Adrenal gland (tissue), 19 donors: ENCODE measurements at regions of chr17 and their contacts with region 1.

Region 1: GRCh38 chr17:49779739-49780231 is 8.7 kb upstream of the KAT7 start:
- DNase-seq: peak in 5 of 7 donors; percentile 41 to 81 (median 59)
- H3K4me3 ChIP-seq: no peak overlapping the region
- H3K27ac ChIP-seq: peak overlapping the region in 1 of 5 donors; percentile 31
- H3K4me1 ChIP-seq: peaks cover 0 to 11% of the 10 kb centered on the region in 2 donors
- H3K27me3 ChIP-seq: no peaks in the 10 kb centered on the region
- CTCF ChIP-seq: peak; percentile 44 to 67 (median 63)
- POLR2A ChIP-seq: no peak

Region 2: DNA sequence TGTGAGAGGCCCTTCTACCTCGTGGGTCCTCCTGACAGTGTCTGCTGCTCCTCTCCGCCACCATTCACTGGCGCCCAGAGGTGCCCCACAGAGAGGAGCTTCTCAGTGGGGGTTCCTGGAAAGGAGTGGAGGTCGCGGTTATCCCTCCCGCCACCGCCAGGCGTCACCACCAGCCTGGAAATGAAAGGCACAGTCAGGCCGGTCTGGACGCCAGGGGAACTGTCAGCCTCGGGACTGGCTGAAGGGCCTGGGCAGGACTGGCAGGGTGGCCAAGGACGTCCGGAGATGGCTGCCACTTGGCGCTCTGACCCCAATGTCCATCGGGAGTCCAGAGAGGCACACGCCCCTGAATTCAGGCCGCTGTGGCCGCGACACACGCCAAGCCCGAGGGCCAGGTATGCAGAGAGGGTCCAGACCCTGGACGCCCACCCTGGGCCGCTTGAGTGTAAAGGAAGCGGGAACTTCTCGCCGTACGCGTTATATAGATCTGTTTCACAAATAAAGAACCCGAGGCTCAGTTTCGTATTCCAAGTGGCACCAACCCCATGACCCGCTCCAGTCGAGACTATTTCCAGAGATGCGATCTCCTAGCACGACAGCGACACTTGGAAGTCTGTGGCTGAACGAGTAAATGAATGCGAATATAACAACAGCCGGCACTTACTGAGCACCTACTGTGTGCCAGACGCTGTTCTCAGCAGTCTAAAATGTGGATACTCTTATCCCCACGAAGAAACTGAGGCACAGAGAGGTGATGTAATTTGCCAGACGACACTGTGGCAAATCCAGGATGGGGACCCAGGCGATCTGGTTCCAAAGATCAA is 211.7 kb before region 1 on chr17:
- intact Hi-C with region 1: loop called (anchors 5 kb)
- DNase-seq: peak; percentile 90 to 97 (median 95)
- H3K4me3 ChIP-seq: peak overlapping the region in 2 of 4 donors; percentile 23 to 46
- H3K27ac ChIP-seq: peak overlapping the region; percentile 38 to 83 (median 63)
- H3K4me1 ChIP-seq: peaks cover 4 to 21% of the 10 kb centered on the region in 2 donors
- H3K27me3 ChIP-seq: peaks cover 6% of the 10 kb centered on the region
- CTCF ChIP-seq: peak; percentile 89 to 100 (median 99)
- POLR2A ChIP-seq: peak in 1 of 2 donors; percentile 27

Region 3: DNA sequence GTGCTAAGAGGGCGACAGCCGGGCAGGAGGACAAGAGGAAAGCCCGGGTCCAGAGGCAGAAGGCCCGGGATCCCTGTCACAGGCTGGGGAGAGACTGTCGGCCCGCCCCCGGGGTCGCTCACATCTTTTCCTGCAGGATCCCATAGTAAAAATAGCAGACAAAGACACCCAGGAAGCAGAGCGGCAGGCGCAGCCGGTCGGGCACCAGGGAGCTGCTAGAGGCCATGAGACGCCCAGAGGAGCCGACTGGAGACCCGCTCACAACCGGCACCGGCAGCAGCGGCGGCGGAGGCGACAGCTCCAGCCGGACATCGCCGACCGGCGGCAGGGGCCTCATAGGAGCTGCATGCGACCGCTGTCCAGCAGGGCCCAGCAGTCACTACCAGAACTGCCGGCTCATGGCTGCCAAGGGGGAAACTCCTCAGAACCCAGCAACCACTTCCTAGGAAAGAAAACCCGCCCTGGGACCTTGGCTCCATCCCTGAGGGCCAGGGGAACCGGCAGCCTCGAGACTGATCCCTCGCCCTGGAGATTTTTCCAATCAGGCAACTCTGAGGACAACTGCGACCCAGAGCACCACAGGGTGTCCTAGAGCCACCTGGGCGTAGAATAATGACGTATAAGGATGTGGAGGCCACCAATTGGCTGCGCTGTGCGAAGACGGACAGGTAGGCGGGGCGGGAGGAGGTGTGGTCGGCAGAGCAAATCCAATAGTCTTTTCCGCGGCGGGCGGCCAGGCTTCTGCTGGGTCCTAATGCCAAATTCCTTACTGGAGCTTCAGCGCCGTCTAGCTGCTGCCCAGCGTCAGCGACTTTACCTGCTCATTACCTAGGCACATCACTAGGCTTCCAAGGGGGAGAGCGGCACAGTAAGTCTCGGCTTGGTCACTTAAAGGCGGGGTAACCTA is 71.9 kb before region 1 on chr17 and contains the start of gene SLC35B1:
- intact Hi-C with region 1: loop called (anchors 5 kb)
- DNase-seq: peak; percentile 98 to 100 (median 99)
- H3K4me3 ChIP-seq: peak within 1 kb of the TSS; percentile 78 to 84 (median 81)
- H3K27ac ChIP-seq: peak within 1 kb of the TSS; percentile 23 to 96 (median 90)
- H3K4me1 ChIP-seq: peaks cover 10 to 12% of the 10 kb centered on the region in 2 donors
- H3K27me3 ChIP-seq: no peaks in the 10 kb centered on the region
- CTCF ChIP-seq: peak; percentile 48 to 73 (median 64)
- POLR2A ChIP-seq: peak; percentile 55 to 69
- total RNA-seq, gene SLC35B1: 20.9 to 87.9 (median 37.4) TPM